Activated CD8-positive, alpha-beta memory T cell treated with anti-CD3 and anti-CD28 coated beads, Interleukin-2, amount 10 ng/mL, durations not matched to agents 7 days and 5 days (primary cell): ENCODE measurements at regions of chr1 and their contacts with region 1.

Region 1: GRCh38 chr1:59046730-59047157 is 250.2 kb upstream of the FGGY start:
- DNase-seq: peak; percentile 78
- ATAC-seq: peak; percentile 90
- H3K4me3 Mint-ChIP-seq: peak overlapping the region; percentile 41
- H3K27ac Mint-ChIP-seq: peak overlapping the region; percentile 89
- H3K4me1 Mint-ChIP-seq: peaks cover 38% of the 10 kb centered on the region
- H3K27me3 Mint-ChIP-seq: no peaks in the 10 kb centered on the region

Region 2: GRCh38 chr1:58783993-58784757 is 262.6 kb before region 1 on chr1 and contains the start of gene JUN:
- CTCF ChIA-PET with region 1: interaction called, 13 read pairs
- DNase-seq: peak; percentile 99
- ATAC-seq: peak; percentile 73
- H3K4me3 Mint-ChIP-seq: peak within 1 kb of the TSS; percentile 86
- H3K27ac Mint-ChIP-seq: peak within 1 kb of the TSS; percentile 94
- H3K4me1 Mint-ChIP-seq: peaks cover 14% of the 10 kb centered on the region
- H3K27me3 Mint-ChIP-seq: peaks cover 4% of the 10 kb centered on the region
- total RNA-seq, gene JUN: 50.5 to 129 TPM